Activated naive CD8-positive, alpha-beta T cell treated with anti-CD3 and anti-CD28 coated beads, Interleukin-2, amount 10 ng/mL, durations not matched to agents 7 days and 5 days (primary cell): ENCODE measurements at regions of chr14 and their contacts with region 1.

Region 1: GRCh38 chr14:105294142-105294597 is 6.6 kb downstream of the BRF1 start:
- DNase-seq: peak; percentile 73
- ATAC-seq: peak; percentile 94
- H3K4me3 Mint-ChIP-seq: peak overlapping the region; percentile 79
- H3K27ac Mint-ChIP-seq: peak overlapping the region; percentile 94
- H3K4me1 Mint-ChIP-seq: peaks cover 40% of the 10 kb centered on the region
- H3K27me3 Mint-ChIP-seq: no peaks in the 10 kb centered on the region

Region 2: GRCh38 chr14:105314287-105315200 is 20.4 kb after region 1 on chr14 and contains the start of gene PACS2:
- POLR2A ChIA-PET with region 1: interaction called, 61 read pairs
- DNase-seq: peak; percentile 92
- ATAC-seq: peak; percentile 79
- H3K4me3 Mint-ChIP-seq: peak within 1 kb of the TSS; percentile 86
- H3K27ac Mint-ChIP-seq: peak within 1 kb of the TSS; percentile 81
- H3K4me1 Mint-ChIP-seq: peaks cover 22% of the 10 kb centered on the region
- H3K27me3 Mint-ChIP-seq: peaks cover 3% of the 10 kb centered on the region
- total RNA-seq, gene PACS2: 51.6 to 54.7 TPM